ENCODE measurements at regions of chr17 and their contacts with region 1.

Region 1: DNA sequence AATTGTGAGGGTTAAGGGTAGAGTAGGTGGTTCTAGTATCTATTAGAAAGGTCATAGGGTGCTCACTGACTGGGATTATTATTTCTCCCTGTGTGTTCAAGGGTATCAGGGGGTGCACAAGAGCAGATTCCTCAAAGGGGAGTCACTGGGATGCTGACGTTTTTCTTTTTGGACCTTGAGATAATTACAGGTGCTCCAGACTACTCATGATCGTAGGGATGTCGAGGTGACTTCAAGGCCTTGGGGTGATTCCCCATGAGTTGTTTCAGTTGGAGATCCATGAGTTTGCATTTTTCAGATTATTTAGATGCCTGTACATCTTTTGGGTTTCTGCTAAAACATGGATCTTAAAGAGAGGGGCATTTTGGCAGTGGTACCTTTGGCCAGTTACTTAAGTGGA is 41.4 kb upstream of the TEKT1 start:
- DNase-seq: no peak
- H3K4me3 ChIP-seq: no peak overlapping the region
- H3K27ac ChIP-seq: no peak overlapping the region
- H3K4me1 ChIP-seq: no peaks in the 10 kb centered on the region
- H3K27me3 ChIP-seq: peaks cover 0 to 3% (median 0%) of the 10 kb centered on the region in 5 experiments

Region 2: DNA sequence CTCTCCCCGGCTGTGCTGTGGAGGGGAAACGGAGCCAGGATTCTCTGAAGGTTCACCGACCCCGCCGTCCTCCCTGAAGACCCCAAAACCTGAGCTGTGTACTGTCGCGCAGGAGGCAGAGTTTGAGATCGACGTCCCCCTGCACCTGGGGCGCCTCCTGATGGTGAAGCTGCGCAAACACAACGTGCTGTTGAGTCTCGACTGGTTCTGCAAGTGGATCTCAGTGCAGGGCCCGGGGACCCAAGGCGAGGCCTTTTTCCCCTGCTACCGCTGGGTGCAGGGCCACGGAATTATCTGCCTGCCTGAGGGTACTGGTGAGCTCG is 21.2 kb after region 1 on chr17:
- CTCF ChIA-PET with region 1: interaction called, 14 read pairs
- POLR2A ChIA-PET with region 1: no interaction called
- DNase-seq: peak; percentile 24 to 72 (median 60)
- H3K4me3 ChIP-seq: peak overlapping the region in 2 of 7 experiments; percentile 13 to 23
- H3K27ac ChIP-seq: no peak overlapping the region
- H3K4me1 ChIP-seq: peaks cover 0 to 9% (median 2%) of the 10 kb centered on the region in 4 experiments
- H3K27me3 ChIP-seq: peaks cover 0 to 28% (median 13%) of the 10 kb centered on the region in 5 experiments